BJ (cell line): ENCODE measurements at regions of chr5 and their contacts with region 1.

Region 1: DNA sequence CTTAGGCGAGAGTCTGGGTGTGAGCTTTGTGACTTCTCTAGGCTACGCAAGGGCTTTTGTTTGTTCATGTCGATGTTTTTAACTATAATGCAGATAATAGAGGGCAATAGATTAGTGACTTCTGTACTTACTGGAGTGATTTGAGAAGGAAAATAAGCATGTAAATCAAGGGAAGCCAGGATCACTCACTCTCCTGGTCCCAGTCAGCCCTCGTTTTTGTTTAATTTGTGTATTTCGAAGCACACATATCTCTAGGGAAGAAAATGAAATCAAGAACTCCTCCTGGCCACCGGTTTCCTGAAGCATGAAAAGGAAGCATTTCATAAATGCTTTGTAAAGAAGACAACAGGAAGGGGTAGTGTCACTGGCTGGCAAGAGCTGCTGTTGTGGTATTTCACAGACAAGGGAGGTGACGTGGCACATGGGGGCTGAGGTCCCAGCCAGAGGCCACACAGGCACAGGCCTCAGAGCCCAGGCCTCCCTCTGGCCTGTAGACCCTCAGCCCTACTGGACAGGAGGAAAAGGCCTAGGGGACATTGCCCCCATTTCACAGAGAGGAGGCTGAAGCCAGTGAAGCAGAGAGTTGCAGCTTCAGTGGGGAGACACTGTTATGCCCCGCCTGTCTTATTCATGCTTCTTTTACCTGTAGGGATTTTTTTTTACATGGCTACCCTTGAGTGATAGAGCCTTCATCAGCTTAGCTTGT is 34.1 kb downstream of the IRF1 start:
- DNase-seq: no peak
- H3K4me3 ChIP-seq: no peak overlapping the region
- H3K27me3 ChIP-seq: no peaks in the 10 kb centered on the region
- CTCF ChIP-seq: no peak

Region 2: DNA sequence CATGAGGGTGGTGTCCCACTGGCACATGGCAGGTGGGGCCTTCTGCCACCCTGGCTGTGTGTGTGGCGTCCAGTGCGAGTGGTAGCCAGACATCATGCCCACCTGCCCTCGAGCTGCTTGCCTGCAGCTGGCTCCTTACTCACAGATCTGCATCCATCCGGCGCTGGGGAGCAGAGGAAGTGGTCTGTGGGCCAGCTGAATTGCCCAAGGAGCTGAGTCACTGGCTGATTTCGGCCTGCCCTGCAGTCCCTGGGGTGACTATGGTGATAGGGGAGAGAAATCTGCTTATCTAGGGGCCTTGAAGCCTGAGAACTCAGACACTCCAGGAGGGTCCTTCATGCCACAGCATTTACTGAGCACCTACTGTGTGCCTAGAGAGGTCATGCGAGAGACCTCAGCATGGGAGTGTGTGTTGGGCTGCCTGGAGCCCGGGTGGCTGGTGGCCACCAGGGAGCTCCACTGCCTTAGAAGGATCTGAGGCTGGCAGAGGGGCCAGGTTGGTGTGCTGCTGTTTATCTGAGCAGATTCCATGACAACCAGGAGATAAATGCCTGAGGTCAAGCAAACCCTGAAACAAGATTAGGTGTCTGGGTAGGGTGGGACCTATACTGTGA is 29.8 kb before region 1 on chr5:
- CTCF ChIA-PET with region 1: interaction called, 12 read pairs
- POLR2A ChIA-PET with region 1: no interaction called
- DNase-seq: peak; percentile 72
- H3K4me3 ChIP-seq: no peak overlapping the region
- H3K27me3 ChIP-seq: no peaks in the 10 kb centered on the region
- CTCF ChIP-seq: peak; percentile 67

Region 3: DNA sequence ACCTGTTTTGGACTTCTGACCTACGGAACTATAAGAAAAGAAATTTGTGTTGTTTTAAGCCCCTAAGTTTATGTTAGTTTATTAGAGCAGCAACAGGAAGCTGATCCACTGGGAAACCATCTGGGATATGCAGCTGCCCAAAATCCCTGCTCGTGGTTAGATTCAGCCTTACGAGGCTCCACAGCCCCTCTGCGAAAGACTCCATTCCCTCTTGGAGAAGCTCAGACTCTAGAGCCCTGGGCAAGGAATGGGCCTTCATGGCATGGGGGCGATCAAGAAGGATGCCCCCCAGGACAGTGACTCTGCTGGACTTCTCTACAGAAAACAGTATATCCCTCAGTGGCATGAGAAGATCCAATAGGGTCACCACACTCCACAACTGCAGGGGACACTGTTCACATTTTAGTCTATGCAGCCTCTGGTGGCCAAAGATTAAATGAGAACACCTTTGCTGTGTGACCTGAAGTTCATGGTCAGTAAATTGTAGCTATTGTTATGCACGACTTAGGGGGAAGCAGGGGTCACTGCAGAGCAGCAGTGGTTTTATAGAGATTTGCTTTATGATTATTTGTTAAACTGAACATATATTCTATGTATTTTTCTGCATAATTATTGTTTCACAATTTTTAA is 13.0 kb after region 1 on chr5:
- CTCF ChIA-PET with region 1: interaction called, 10 read pairs
- POLR2A ChIA-PET with region 1: no interaction called
- DNase-seq: no peak
- H3K4me3 ChIP-seq: no peak overlapping the region
- H3K27me3 ChIP-seq: no peaks in the 10 kb centered on the region
- CTCF ChIP-seq: no peak